ENCODE measurements at regions of chr2 and their contacts with region 1.

Region 1: DNA sequence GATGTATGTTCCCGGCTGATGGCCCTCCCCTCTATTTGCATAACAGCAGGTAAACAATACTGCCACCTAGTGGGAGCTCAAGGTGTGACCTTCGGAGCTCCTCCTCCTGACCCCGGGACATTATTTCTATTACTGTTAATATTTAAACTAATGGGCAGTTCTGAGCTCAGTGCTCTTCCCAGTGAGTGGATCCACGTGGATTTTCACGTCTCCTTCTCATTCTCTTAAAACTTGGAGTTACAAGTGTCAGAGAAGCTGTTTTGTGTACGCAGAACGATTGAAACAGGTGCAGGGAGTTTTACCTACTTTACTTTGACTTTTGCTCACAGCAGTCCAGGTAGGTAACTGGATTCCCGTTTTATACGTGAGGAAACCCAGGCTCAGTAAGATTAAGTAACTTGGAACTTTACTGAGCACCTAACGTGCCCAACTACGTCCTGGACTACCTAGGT is 127.3 kb downstream of the PRKCE start:
- DNase-seq: peak; percentile 50 to 73 (median 54)
- H3K4me3 ChIP-seq: no peak overlapping the region
- H3K27ac ChIP-seq: no peak overlapping the region
- H3K4me1 ChIP-seq: no peaks in the 10 kb centered on the region
- H3K27me3 ChIP-seq: no peaks in the 10 kb centered on the region
- CTCF ChIP-seq: peak; percentile 49 to 55 (median 51)
- EP300 ChIP-seq: no peak
- POLR2A ChIP-seq: no peak

Region 2: DNA sequence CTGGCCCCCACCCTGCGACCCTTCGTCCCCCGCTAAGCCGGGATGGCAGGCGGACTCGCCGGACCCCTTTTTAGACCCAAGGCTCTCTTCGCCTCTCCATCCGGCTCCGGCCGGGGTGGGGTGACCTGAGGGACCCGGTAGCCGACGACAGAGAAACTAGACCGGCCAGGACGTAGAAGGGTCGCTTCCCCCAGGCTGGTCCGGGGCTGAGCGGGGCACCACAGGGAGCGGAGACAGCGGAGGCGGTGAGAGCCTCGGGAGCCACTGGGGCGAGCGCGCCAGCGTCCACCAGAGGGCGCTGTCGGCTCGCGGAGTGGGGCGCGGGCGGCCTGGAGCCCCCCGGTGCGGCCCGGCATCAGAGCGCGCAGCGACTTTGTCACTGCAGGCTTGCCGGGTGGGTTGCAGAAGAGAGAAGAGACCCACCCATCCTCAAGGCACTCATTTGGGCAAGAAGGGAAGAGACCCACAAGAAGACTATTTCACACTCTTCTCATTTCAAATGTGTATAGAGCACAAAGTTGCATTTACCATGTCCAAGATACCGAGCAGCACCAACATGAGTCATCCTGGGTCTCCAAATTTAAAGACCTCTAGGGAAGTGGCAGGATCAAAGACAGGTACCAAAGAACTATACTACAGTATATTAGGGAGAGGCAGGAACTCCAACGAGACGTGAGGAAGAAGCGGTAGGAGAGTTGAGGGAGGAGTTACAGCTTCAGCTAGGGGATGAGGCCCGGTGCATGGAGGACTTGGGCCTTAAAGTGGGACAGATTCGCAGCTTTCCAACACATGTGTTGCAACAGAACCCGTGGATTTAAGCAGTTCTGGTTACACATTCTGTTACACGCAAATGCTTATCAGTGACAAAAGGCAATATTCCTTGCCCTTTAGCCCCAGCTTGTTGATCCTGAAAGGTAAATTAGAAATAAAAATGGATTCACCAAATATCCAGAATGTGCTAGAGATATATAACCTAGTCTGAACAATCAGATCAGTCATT is 134.9 kb before region 1 on chr2:
- intact Hi-C with region 1: loop called (anchors 2 to 10 kb)
- DNase-seq: peak; percentile 59 to 84 (median 76)
- H3K4me3 ChIP-seq: peak overlapping the region; percentile 24
- H3K27ac ChIP-seq: no peak overlapping the region
- H3K4me1 ChIP-seq: no peaks in the 10 kb centered on the region
- H3K27me3 ChIP-seq: no peaks in the 10 kb centered on the region
- CTCF ChIP-seq: peak; percentile 94 to 98 (median 98)
- EP300 ChIP-seq: no peak
- POLR2A ChIP-seq: peak; percentile 27

Region 3: DNA sequence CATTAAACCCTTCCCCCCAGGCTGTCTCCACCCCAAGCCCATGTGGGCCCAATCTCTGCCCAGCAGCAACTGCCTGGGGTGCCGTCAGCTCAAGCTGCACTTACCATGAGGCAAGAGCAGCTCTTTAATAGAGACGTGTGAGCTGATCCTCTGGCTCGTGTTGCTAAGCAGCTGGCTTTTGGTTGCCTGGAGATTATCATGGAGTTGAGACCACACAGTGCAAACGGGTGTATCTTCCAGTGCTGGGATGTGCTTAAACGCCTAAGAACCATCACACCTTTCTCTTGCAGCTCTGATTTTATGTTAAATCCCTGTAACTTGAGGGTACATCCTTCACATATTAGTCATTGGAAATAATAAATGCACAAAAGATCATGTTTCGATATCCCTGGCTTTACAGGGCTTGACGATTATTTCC is 143.8 kb after region 1 on chr2:
- intact Hi-C with region 1: loop called in 1 of 4 experiments (anchors 10 kb)
- DNase-seq: no peak
- H3K4me3 ChIP-seq: no peak overlapping the region
- H3K27ac ChIP-seq: no peak overlapping the region
- H3K4me1 ChIP-seq: no peaks in the 10 kb centered on the region
- H3K27me3 ChIP-seq: no peaks in the 10 kb centered on the region
- CTCF ChIP-seq: no peak
- EP300 ChIP-seq: no peak
- POLR2A ChIP-seq: no peak

Measured in ovary (tissue), 10 donors.